Tibial artery (tissue), 4 donors: ENCODE measurements at regions of chr1 and their contacts with region 1.

Region 1: DNA sequence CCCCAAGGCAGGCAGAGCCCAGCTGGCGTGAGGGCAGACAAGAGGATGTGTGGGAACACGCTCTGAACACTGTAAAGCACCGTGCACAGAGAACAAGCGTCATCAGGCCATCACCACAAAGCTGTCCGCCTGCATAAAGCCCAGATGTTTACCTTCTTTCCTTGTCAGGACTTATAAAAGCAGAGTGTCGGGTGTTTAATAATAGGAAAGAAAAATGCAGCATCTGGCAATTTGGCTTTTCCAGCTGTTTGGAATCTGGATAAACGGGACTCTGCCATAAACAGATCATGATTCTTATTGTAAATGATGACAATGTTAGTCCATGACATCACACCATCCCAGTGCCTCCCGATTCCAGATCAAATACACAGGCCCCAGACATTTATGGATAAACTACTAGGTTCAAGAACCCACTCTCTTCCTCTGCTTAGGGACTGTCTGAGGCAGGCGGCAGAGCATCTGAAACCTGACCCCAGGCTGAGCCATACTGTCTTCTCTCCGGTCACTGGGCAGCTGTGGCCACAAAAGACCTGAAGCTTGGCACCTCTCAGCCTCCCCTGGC is 4.2 kb downstream of the GLIS1 start:
- DNase-seq: no peak
- H3K4me3 ChIP-seq: no peak overlapping the region
- H3K27ac ChIP-seq: no peak overlapping the region
- H3K4me1 ChIP-seq: peaks cover 4 to 22% (median 17%) of the 10 kb centered on the region in 4 donors
- H3K27me3 ChIP-seq: peaks cover 0 to 56% of the 10 kb centered on the region in 2 donors
- CTCF ChIP-seq: no peak

Region 2: GRCh38 chr1:53678507-53678906 is 56.2 kb before region 1 on chr1:
- intact Hi-C with region 1: loop called (anchors 2 kb)
- DNase-seq: no peak
- H3K4me3 ChIP-seq: no peak overlapping the region
- H3K27ac ChIP-seq: no peak overlapping the region
- H3K4me1 ChIP-seq: peaks cover 0 to 8% (median 0%) of the 10 kb centered on the region in 4 donors
- H3K27me3 ChIP-seq: peaks cover 0 to 40% of the 10 kb centered on the region in 2 donors
- CTCF ChIP-seq: no peak